WTC11 (cell line): ENCODE measurements at regions of chr7 and their contacts with region 1.

Region 1: GRCh38 chr7:23696916-23697441 is 13.0 kb upstream of the STK31 start:
- DNase-seq: peak; percentile 85
- ATAC-seq: peak; percentile 99
- H3K4me3 Mint-ChIP-seq: no peak overlapping the region
- H3K27ac Mint-ChIP-seq: no peak overlapping the region
- H3K4me1 Mint-ChIP-seq: no peaks in the 10 kb centered on the region
- H3K27me3 Mint-ChIP-seq: no peaks in the 10 kb centered on the region
- CTCF ChIP-seq: peak; percentile 86

Region 2: DNA sequence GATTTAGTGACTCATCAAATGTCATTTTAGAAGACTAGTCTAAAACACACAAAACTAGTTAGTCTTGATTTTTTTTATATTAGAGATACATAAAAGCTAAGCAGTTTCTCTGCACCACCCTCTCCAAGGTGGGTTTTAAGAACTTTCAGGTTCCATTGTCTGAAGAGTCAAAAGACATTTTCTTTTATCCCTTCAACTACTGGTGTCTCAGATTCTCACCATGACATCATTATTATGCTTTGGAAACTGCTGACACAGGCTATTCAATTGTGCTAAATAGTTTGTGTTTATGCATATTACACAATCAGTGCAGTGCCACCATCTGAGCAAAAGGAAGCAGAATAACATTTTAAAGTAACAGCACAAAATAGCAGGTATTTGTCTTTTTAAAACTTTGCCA is 278.9 kb before region 1 on chr7:
- CTCF ChIA-PET with region 1: no interaction called
- POLR2A ChIA-PET with region 1: no interaction called
- DNase-seq: no peak
- ATAC-seq: no peak
- H3K4me3 Mint-ChIP-seq: peak overlapping the region; percentile 32; the same call in 1 of the 2 replicates
- H3K27ac Mint-ChIP-seq: peak overlapping the region; percentile 86
- H3K4me1 Mint-ChIP-seq: peaks cover 55% of the 10 kb centered on the region
- H3K27me3 Mint-ChIP-seq: no peaks in the 10 kb centered on the region
- CTCF ChIP-seq: no peak

Region 3: DNA sequence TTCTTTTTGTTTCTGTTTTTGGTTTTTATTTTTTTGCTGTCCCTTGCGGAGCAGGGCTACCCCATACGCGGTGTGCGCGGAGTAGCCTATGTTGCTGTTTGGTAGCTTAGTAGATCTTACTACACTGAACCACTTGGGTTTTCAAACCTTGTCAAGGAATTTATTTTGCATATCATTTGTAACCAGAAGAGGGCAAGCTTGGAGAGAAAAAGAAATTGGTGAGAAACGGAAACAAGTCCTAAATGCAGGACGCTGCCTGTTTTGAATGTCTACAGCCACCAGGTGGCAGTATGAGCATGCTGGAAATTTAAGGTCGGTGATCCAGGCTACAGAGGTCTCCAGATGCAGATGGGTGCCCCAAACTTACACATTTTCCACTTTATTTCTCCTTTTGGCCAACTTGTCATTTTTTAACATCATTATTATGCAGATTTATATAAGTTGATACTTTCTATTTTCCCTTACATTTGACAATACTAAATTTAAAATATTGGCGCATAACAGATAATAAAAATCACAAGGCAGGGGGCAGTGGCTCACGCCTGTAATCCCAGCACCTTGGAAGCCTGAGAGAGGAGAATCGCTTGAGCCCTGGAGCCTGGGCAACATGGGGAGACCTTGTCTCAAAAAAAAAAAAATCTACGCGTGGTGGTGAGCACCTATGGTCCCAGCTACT is 149.9 kb before region 1 on chr7:
- CTCF ChIA-PET with region 1: interaction called, 10 read pairs
- POLR2A ChIA-PET with region 1: no interaction called
- DNase-seq: peak; percentile 78
- ATAC-seq: peak; percentile 89
- H3K4me3 Mint-ChIP-seq: no peak overlapping the region
- H3K27ac Mint-ChIP-seq: no peak overlapping the region
- H3K4me1 Mint-ChIP-seq: peaks cover 2% of the 10 kb centered on the region
- H3K27me3 Mint-ChIP-seq: no peaks in the 10 kb centered on the region
- CTCF ChIP-seq: peak; percentile 82

Region 4: DNA sequence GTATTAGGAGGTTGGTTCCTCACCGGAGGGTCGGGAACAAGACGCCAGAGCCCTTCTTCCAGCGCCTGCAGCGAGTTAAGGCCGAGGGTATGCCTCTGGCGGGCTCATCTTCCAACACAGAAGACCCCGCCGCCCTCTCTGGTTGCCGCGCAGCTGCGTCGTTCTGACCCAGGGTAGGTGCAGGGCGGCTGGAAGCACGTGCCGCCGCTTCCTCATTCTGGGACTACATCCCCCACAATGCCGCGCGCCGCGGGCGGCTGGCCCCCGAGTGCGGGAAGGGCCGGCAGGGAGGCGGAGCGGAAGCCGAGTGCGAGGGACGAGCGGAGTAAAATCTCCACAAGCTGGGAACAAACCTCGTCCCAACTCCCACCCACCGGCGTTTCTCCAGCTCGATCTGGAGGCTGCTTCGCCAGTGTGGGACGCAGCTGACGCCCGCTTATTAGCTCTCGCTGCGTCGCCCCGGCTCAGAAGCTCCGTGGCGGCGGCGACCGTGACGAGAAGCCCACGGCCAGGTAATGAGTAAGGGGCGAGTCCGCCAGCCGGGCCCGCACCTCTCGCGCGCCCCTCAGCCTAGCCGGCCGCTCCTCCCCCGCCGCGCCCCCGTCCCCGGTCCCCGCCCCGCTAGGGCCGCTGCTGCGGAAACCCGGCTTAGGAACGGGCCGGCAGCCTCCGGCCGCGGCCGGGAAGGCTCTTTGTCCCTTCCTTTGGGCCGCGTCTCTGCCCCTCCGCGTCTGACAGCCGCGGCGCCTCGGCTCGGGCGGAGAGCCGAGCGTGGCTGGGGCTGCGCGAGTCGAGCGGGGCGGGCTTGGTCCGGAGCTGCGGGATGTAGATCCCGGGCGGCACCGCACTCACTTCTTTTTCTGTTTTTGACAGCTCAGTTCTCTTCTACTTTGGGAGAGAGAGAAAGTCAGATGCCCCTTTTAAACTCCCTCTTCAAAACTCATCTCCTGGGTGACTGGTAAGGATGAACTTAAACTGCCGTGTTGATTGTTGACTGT is 99.6 kb before region 1 on chr7 and contains the start of gene CCDC126:
- CTCF ChIA-PET with region 1: interaction called, 12 read pairs
- POLR2A ChIA-PET with region 1: no interaction called
- DNase-seq: peak; percentile 97
- ATAC-seq: peak; percentile 91
- H3K4me3 Mint-ChIP-seq: peak within 1 kb of the TSS; percentile 93
- H3K27ac Mint-ChIP-seq: peak within 1 kb of the TSS; percentile 88
- H3K4me1 Mint-ChIP-seq: peaks cover 24% of the 10 kb centered on the region
- H3K27me3 Mint-ChIP-seq: peaks cover 29% of the 10 kb centered on the region
- CTCF ChIP-seq: no peak
- total RNA-seq, gene CCDC126: 3.3 to 5.1 TPM (median 3.8 TPM) in 3 replicates

Region 5: GRCh38 chr7:23662124-23662983 is 34.6 kb before region 1 on chr7:
- CTCF ChIA-PET with region 1: interaction called, 16 read pairs
- POLR2A ChIA-PET with region 1: no interaction called
- DNase-seq: peak; percentile 30
- ATAC-seq: peak; percentile 88
- H3K4me3 Mint-ChIP-seq: peak overlapping the region; percentile 29
- H3K27ac Mint-ChIP-seq: peak overlapping the region; percentile 91
- H3K4me1 Mint-ChIP-seq: peaks cover 39% of the 10 kb centered on the region
- H3K27me3 Mint-ChIP-seq: no peaks in the 10 kb centered on the region; the same call in 1 of the 2 replicates
- CTCF ChIP-seq: no peak

Region 6: DNA sequence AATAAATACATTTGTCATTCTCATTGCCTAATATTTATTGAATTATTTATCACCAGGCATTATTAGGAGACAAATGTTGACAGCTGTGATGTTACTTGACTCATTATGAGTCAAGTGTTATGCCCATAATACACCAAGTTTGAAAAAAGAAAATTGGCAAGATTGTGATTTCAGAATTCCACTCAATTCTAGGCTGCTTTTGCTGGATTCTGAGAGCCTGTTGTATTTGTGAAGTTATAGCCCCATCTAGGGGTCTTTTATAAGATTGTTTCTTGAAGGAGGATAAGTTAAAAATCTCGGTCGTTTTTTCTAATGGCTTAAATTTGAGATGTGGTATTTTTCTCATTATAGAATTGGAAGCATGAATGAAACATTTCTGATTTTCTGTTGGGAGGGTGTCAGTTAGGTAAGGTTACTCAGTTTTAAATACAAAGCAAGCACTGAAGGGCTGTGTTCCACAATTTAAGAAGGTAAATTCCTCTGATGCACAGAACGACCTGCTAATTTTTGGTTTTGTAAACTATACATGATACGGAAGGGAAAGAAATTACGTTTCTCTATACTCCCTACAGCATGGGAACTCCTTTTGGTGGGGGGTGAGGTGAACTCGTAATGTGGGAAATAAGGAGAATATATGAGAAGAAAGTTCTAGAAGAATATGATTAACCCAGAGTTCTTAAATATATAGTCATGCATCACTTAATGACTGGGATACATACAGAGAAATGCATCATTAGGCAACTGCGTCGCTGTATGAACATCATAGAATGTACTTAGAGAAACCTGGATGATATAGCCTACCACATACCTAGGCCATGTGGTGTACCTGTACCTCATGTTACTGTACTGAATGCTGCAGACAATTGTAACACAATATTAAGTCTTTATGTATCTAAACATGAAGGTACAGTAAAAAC is 15.6 kb after region 1 on chr7:
- CTCF ChIA-PET with region 1: interaction called, 26 read pairs
- POLR2A ChIA-PET with region 1: no interaction called
- DNase-seq: no peak
- ATAC-seq: no peak
- H3K4me3 Mint-ChIP-seq: no peak overlapping the region
- H3K27ac Mint-ChIP-seq: no peak overlapping the region
- H3K4me1 Mint-ChIP-seq: no peaks in the 10 kb centered on the region
- H3K27me3 Mint-ChIP-seq: peaks cover 5% of the 10 kb centered on the region; the same call in 1 of the 2 replicates
- CTCF ChIP-seq: peak; percentile 35

Region 7: GRCh38 chr7:23811540-23811939 is 114.6 kb after region 1 on chr7:
- CTCF ChIA-PET with region 1: no interaction called
- POLR2A ChIA-PET with region 1: no interaction called
- DNase-seq: no peak
- ATAC-seq: no peak
- H3K4me3 Mint-ChIP-seq: no peak overlapping the region
- H3K27ac Mint-ChIP-seq: no peak overlapping the region
- H3K4me1 Mint-ChIP-seq: no peaks in the 10 kb centered on the region
- H3K27me3 Mint-ChIP-seq: no peaks in the 10 kb centered on the region
- CTCF ChIP-seq: peak; percentile 66